ENCODE measurements at regions of chr7 and their contacts with region 1.

Region 1: GRCh38 chr7:152568972-152569371 is 107.0 kb downstream of the XRCC2 start:
- DNase-seq: peak; percentile 26

Region 2: DNA sequence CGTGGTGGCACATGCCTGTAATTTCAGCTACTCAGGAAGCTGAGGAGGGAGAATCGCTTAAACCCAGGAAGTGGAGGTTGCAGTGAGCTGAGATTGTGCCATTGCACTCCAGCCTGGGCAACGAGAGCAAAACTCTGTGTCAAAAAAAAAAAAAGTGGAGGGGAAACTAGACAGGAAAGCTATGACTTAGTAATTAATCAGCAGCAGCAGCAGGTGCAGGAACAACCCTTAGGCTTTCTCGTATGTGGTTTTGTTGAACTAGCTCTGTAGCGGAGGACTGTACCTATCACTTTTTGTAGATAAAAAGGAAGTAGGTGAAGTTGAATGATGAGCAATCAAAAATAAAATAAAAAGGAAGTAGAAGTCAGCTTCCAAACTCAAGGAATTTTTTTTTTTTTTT is 56.3 kb before region 1 on chr7:
- intact Hi-C with region 1: loop called in 1 of 2 experiments (anchors 5 kb)
- DNase-seq: no peak

Region 3: DNA sequence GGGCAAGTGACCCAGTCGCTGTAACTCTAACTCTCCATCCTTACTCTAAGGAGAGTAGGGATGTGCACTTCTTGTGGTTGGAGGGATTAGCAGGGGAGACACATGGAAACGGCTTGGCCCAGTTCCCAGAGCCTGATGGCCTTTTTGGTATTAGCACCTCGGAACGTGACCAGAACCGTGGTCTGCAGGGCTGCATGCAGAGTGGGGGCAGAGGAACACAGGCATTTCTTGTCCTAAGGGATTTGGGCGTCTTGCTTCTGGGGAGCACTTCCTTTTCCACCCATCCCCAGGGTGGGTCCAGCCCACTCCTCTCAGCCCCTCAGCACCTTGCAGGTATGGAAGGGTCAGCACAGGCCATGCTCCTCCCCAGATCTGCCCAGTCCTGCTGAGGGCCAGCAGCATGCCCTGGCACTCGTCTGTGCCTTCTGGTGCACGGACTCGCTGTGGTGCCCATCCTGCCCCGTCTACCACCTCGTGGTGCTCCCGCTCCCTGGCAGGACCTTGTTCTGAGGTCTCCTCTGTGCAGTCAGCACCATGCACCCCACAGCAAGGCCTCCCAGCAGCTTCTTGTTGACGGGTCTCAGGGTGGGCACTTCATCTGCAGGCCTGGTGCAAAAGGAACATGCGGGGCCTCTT is 300.2 kb after region 1 on chr7:
- intact Hi-C with region 1: no loop called
- DNase-seq: no peak

Region 4: DNA sequence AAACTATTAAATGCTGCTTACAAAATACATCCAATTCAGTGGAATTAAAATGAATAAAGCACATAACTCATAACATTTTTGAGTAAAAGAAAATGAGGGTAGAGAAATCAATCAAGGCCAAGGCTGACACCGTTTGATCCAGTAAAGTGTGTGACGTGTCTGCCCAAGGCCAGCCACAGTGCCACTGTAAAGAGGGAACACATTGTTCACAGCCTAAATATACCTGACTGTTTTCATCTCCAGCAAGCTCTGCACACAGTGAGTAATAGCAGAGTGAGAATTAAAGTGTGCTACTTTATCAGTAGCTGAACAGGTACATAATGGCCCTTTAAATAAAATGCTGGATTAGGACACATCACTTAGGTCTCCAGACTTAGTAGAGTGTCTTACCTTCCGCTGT is 1352.4 kb after region 1 on chr7:
- intact Hi-C with region 1: loop called in 1 of 2 experiments (anchors 5 kb)
- DNase-seq: no peak